Psoas muscle (tissue), 8 donors: ENCODE measurements at regions of chr2 and their contacts with region 1.

Region 1: GRCh38 chr2:40760071-40760666 is 308.3 kb upstream of the SLC8A1 start:
- DNase-seq: no peak
- ATAC-seq: peak in 2 of 4 donors; percentile 49
- H3K4me3 ChIP-seq: no peak overlapping the region
- H3K27ac ChIP-seq: no peak overlapping the region
- H3K4me1 ChIP-seq: no peaks in the 10 kb centered on the region
- H3K27me3 ChIP-seq: no peaks in the 10 kb centered on the region
- CTCF ChIP-seq: peak; percentile 42

Region 2: DNA sequence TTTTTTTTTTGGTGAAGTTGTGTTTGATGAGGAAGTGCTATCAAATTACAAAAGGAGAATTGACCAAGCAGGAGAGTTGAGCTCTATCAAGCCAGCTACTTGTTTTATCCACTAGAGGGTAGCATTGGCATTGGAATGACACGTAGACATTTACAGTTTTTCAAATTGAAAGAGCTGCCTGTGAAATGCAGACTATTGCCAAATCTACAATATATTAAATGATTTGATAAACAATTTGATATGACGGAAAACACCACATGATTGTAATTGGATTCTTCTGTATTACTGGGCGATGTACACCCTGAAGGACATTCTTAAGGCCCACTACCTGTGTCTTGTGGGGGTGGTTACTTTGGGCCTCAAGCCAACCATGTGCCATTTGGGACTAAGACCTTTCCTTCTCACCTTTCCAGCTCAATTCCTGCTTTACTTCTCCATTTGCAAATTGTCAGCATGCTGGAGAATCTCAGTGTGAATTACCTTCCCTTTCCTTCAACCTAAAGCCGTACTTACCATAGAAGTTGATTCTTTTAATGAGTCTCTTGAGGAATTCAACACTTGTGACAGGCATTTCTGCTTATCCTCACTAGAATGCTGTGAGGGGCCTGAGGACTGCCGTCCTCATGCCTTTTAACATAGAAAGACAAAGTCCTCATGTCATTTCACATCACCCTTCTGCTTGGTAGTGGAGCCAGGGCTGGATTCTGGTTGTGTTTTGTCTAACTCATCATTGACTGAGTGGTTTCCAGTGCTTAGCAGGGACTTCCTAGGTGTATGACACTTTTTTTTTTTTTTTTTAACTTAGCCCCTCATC is 846.3 kb before region 1 on chr2:
- intact Hi-C with region 1: loop called in 1 of 2 experiments (anchors 5 kb)
- DNase-seq: no peak
- ATAC-seq: peak in 3 of 4 donors; percentile 46 to 77 (median 65)
- H3K4me3 ChIP-seq: no peak overlapping the region
- H3K27ac ChIP-seq: no peak overlapping the region
- H3K4me1 ChIP-seq: no peaks in the 10 kb centered on the region
- H3K27me3 ChIP-seq: peaks cover 0 to 3% (median 0%) of the 10 kb centered on the region in 3 donors
- CTCF ChIP-seq: peak; percentile 83